MCF 10A (cell line): ENCODE measurements at regions of chr11 and their contacts with region 1.

Region 1: DNA sequence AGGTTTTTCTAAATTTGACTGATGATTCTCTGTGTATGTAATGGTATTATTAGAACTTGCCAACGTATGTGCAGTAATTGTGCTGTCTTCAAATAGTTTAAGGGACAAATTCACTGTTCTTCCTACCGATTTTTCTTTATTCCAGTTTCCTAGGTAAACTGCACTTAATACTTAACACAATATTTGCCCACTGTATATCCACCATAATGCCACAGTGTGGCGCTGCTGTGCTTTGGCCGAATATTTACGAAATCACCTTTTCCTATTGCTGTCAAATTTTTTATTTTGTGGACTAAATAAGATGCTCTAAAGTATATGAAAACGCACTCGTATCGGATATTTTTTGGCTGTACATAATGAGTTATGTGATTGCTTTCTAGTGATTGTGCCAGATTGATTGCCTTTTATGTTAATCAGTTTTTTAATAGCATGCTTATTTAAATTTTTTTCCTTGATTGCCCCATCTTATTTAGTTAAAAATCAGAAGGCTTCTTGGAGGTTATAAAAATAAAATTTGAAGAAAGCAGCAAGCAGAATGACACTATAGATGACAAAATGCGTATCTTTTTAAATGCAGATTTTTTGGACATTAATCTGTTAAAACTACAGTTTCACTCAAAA is 10.5 kb downstream of the AASDHPPT start:
- DNase-seq: peak; percentile 72
- H3K4me3 Mint-ChIP-seq: peak overlapping the region; percentile 32
- H3K27ac Mint-ChIP-seq: no peak overlapping the region
- H3K4me1 Mint-ChIP-seq: peaks cover 48% of the 10 kb centered on the region
- H3K27me3 Mint-ChIP-seq: no peaks in the 10 kb centered on the region
- CTCF ChIP-seq: peak; percentile 80

Region 2: DNA sequence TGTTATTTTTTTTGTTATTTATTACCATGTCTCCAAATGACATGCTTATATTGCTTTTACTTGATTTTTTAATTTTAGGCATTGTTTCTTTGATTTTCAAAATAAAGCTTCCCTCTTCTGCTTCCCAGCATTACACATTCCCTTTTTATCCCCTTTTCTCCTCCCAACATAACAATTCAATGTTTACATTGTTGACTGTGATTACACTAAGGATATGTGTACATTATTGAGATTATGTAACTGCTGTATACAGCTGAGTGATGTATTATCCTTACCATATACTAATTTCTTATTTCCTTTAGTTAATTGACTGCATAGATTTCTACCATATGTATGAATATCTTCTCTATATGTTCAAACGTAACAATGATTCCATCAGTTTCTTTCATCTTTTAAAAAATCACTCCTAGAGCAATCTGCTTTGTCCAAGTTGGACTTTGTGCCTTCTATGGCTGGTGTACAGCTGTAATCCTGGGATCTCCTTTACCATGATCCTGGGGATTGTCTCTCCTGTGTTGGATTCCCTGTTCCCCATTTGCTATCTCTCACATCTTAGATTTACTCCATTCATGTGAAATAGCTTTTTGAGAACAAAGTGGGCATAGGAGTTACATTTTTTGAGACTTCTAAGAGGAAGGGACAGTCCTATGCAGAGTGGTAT is 11.1 kb after region 1 on chr11:
- CTCF ChIA-PET with region 1: interaction called, 11 read pairs
- POLR2A ChIA-PET with region 1: interaction called, 5 read pairs
- intact Hi-C with region 1: no loop called
- DNase-seq: no peak
- H3K4me3 Mint-ChIP-seq: no peak overlapping the region
- H3K27ac Mint-ChIP-seq: no peak overlapping the region
- H3K4me1 Mint-ChIP-seq: no peaks in the 10 kb centered on the region
- H3K27me3 Mint-ChIP-seq: no peaks in the 10 kb centered on the region
- CTCF ChIP-seq: no peak

Region 3: GRCh38 chr11:106156290-106156937 is 68.5 kb after region 1 on chr11:
- CTCF ChIA-PET with region 1: interaction called, 3 read pairs
- POLR2A ChIA-PET with region 1: interaction called, 3 read pairs
- intact Hi-C with region 1: loop called (anchors 5 kb)
- DNase-seq: peak; percentile 69
- H3K4me3 Mint-ChIP-seq: no peak overlapping the region
- H3K27ac Mint-ChIP-seq: peak overlapping the region; percentile 82
- H3K4me1 Mint-ChIP-seq: peaks cover 13% of the 10 kb centered on the region
- H3K27me3 Mint-ChIP-seq: no peaks in the 10 kb centered on the region
- CTCF ChIP-seq: peak; percentile 62

Region 4: GRCh38 chr11:107017433-107018227 is 929.7 kb after region 1 on chr11:
- CTCF ChIA-PET with region 1: no interaction called
- POLR2A ChIA-PET with region 1: no interaction called
- intact Hi-C with region 1: loop called (anchors 5 kb)
- DNase-seq: peak; percentile 44
- H3K4me3 Mint-ChIP-seq: peak overlapping the region; percentile 59
- H3K27ac Mint-ChIP-seq: no peak overlapping the region
- H3K4me1 Mint-ChIP-seq: peaks cover 4% of the 10 kb centered on the region
- H3K27me3 Mint-ChIP-seq: peaks cover 55% of the 10 kb centered on the region
- CTCF ChIP-seq: peak; percentile 40